ENCODE measurements at regions of chr5 and their contacts with region 1.

Region 1: DNA sequence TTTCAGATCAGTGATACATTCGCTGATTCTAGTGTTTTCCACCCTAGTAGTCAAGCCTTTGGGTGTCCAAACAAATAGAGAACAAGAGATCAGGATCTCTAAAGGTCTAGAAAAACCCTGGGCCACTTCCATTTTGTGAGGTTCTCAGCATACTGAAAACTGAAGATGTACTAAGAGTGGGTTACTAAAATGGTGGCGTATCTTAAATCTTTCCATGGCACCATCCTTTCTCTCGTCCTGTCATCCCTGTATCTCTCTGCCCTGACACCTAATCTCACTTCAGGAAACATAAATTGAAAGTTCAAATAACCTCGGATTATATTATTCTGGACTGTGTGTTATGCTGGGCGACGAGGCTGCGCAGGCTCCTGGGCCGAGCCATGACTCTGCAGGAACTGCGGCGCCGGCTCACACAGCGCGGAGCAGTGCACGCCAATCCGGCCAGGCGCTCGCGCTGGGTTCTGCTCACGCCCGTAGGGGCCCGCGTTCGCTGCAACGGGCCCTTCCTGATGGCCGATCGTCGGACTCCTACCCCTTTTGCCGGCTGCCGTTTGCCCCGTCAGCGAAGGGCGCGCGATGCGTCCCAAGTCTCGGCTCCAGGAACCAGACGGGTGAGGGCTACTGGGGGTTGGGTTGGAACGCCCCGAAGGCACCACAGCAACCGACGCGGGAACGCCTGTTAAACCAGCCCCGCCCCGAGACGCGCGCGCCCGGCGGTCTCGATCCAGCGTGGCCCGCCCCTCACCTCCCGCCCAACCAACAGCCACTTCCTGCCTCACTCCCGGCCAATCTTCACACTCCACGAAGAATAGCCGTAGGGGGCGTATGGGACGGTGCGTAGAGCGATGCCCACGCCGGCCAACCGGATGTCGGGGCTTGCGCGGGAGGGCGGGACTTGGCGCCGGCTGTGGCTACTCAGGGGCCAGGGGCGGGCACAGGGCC is 503 bp upstream of the CANX start:
- DNase-seq: peak; percentile 99
- ATAC-seq: peak; percentile 91
- H3K4me3 Mint-ChIP-seq: peak overlapping the region; percentile 96
- H3K27ac Mint-ChIP-seq: peak overlapping the region; percentile 99
- H3K4me1 Mint-ChIP-seq: peaks cover 31% of the 10 kb centered on the region
- H3K27me3 Mint-ChIP-seq: no peaks in the 10 kb centered on the region
- CTCF ChIP-seq: no peak

Region 2: DNA sequence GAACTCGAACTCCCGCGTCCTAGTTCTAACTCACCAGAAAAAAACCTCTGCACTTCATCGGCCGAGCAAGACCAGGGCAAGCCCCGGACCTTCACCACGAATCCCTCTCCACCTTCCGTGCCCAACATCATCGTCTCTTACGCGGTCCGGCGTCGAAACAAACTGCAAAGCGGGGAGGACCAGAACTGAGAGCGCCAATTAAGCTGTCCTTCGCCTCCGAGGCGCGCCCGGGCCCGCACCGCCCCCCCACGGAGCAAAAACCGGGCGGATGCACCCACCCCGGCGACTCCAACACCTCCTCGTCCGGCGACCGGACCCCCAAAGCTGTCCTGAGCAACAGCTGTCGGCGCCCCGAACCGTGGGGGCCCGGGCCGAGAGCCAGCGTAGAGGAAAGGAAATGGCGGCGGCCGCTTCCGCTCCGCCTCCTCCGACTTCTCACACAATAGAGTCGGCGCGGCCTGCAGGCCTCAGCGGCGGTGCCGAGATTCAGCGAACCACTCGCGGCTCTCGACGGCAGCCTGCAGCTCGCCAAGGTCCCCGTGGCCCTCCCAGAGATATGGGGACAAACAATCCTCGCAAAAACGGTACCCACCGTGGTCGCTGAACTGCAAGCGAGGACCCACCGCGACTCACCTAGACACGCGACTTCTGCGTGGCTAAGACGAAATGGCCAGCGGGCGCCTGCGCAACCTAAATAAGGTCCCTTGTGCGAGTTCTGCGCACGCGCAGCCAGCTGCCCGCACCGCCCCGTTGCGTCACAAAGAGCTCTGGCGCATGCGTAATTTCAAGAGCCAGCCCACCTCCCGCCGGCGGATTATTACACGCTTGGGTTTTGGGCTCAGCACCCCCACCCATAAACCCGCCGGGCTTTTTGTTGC is 75.0 kb before region 1 on chr5 and contains the start of gene HNRNPH1:
- CTCF ChIA-PET with region 1: interaction called, 3 read pairs
- POLR2A ChIA-PET with region 1: interaction called, 49 read pairs
- intact Hi-C with region 1: no loop called
- DNase-seq: peak; percentile 99
- ATAC-seq: peak; percentile 79
- H3K4me3 Mint-ChIP-seq: peak within 1 kb of the TSS; percentile 82
- H3K27ac Mint-ChIP-seq: peak within 1 kb of the TSS; percentile 94
- H3K4me1 Mint-ChIP-seq: peaks cover 25% of the 10 kb centered on the region
- H3K27me3 Mint-ChIP-seq: no peaks in the 10 kb centered on the region
- CTCF ChIP-seq: peak; percentile 23
- total RNA-seq, gene HNRNPH1: 706 to 709 TPM

Region 3: DNA sequence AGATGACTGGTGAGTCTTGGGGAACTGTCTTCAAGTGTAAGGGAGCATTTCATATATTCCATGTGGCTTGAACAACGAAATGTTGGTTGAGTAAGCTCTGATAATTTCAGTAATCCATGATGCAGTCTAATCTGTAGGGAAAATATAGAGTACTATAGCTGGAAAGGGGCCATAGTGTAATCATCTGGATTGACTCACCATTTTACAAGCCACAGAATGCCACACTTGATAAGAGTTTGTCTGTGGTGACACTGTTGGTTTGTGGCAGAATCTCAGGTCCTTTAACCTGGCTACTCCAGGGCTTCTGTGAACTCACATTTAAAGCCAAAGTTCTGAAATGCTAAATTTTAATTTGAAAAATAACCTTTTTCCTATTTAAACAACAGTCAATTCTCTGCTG is 18.0 kb after region 1 on chr5:
- CTCF ChIA-PET with region 1: interaction called, 4 read pairs
- POLR2A ChIA-PET with region 1: interaction called, 23 read pairs
- intact Hi-C with region 1: no loop called
- DNase-seq: no peak
- ATAC-seq: no peak
- H3K4me3 Mint-ChIP-seq: no peak overlapping the region
- H3K27ac Mint-ChIP-seq: peak overlapping the region; percentile 48
- H3K4me1 Mint-ChIP-seq: peaks cover 4% of the 10 kb centered on the region
- H3K27me3 Mint-ChIP-seq: no peaks in the 10 kb centered on the region
- CTCF ChIP-seq: no peak

Region 4: GRCh38 chr5:179732417-179732917 is 34.2 kb after region 1 on chr5 and contains the start of gene MAML1:
- CTCF ChIA-PET with region 1: interaction called, 5 read pairs
- POLR2A ChIA-PET with region 1: interaction called, 13 read pairs
- intact Hi-C with region 1: loop called (anchors 2 kb)
- DNase-seq: peak; percentile 100
- ATAC-seq: peak; percentile 96
- H3K4me3 Mint-ChIP-seq: peak within 1 kb of the TSS; percentile 97
- H3K27ac Mint-ChIP-seq: peak within 1 kb of the TSS; percentile 94
- H3K4me1 Mint-ChIP-seq: peaks cover 43% of the 10 kb centered on the region
- H3K27me3 Mint-ChIP-seq: no peaks in the 10 kb centered on the region
- CTCF ChIP-seq: no peak
- total RNA-seq, gene MAML1: 26.1 to 26.6 TPM

Region 5: GRCh38 chr5:179747811-179748210 is 49.5 kb after region 1 on chr5:
- CTCF ChIA-PET with region 1: no interaction called
- POLR2A ChIA-PET with region 1: no interaction called
- intact Hi-C with region 1: no loop called
- DNase-seq: no peak
- ATAC-seq: no peak
- H3K4me3 Mint-ChIP-seq: no peak overlapping the region
- H3K27ac Mint-ChIP-seq: no peak overlapping the region
- H3K4me1 Mint-ChIP-seq: peaks cover 19% of the 10 kb centered on the region
- H3K27me3 Mint-ChIP-seq: no peaks in the 10 kb centered on the region
- CTCF ChIP-seq: no peak